Breast epithelium (tissue), 4 donors: ENCODE measurements at regions of chr3 and their contacts with region 1.

Region 1: DNA sequence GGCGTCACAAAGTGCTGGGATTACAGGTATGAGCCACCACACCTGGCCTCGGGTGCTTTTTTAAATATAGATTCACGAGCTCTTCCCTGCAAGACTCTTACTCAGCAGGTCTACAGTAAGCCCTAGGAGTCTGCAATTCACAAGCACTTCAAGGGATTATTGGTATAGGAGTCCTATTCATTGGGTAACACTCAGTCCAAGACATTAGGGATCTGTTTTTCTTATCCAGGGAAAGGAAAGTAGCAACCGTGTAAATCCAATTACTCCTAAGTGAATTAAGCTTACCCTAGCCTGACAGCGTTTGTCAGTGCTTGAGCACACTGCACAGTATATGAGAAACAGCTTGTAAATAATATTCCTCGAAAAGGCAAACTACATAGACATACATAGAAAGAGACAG is 109.9 kb downstream of the SENP2 start:
- DNase-seq: no peak
- H3K4me3 ChIP-seq: no peak overlapping the region
- H3K27ac ChIP-seq: no peak overlapping the region
- H3K4me1 ChIP-seq: no peaks in the 10 kb centered on the region
- H3K27me3 ChIP-seq: no peaks in the 10 kb centered on the region
- CTCF ChIP-seq: no peak
- POLR2A ChIP-seq: no peak

Region 2: GRCh38 chr3:185677146-185677829 is 18.8 kb before region 1 on chr3:
- intact Hi-C with region 1: no loop called
- DNase-seq: no peak
- H3K4me3 ChIP-seq: no peak overlapping the region
- H3K27ac ChIP-seq: no peak overlapping the region
- H3K4me1 ChIP-seq: no peaks in the 10 kb centered on the region
- H3K27me3 ChIP-seq: no peaks in the 10 kb centered on the region
- CTCF ChIP-seq: peak in 2 of 3 donors; percentile 52 to 62
- POLR2A ChIP-seq: no peak

Region 3: GRCh38 chr3:186003610-186004009 is 307.6 kb after region 1 on chr3:
- intact Hi-C with region 1: no loop called
- DNase-seq: no peak
- H3K4me3 ChIP-seq: no peak overlapping the region
- H3K27ac ChIP-seq: no peak overlapping the region
- H3K4me1 ChIP-seq: no peaks in the 10 kb centered on the region
- H3K27me3 ChIP-seq: no peaks in the 10 kb centered on the region
- CTCF ChIP-seq: no peak
- POLR2A ChIP-seq: no peak

Region 4: GRCh38 chr3:186032321-186032720 is 336.3 kb after region 1 on chr3:
- intact Hi-C with region 1: loop called (anchors 5 kb)
- DNase-seq: no peak
- H3K4me3 ChIP-seq: no peak overlapping the region
- H3K27ac ChIP-seq: no peak overlapping the region
- H3K4me1 ChIP-seq: no peaks in the 10 kb centered on the region
- H3K27me3 ChIP-seq: no peaks in the 10 kb centered on the region
- CTCF ChIP-seq: no peak
- POLR2A ChIP-seq: no peak